GM10248 (cell line): ENCODE measurements at regions of chr15 and their contacts with region 1.

Region 1: GRCh38 chr15:82999905-83000671 is 11.4 kb downstream of the C15orf40 start:
- DNase-seq: peak; percentile 61
- CTCF ChIP-seq: peak; percentile 53

Region 2: DNA sequence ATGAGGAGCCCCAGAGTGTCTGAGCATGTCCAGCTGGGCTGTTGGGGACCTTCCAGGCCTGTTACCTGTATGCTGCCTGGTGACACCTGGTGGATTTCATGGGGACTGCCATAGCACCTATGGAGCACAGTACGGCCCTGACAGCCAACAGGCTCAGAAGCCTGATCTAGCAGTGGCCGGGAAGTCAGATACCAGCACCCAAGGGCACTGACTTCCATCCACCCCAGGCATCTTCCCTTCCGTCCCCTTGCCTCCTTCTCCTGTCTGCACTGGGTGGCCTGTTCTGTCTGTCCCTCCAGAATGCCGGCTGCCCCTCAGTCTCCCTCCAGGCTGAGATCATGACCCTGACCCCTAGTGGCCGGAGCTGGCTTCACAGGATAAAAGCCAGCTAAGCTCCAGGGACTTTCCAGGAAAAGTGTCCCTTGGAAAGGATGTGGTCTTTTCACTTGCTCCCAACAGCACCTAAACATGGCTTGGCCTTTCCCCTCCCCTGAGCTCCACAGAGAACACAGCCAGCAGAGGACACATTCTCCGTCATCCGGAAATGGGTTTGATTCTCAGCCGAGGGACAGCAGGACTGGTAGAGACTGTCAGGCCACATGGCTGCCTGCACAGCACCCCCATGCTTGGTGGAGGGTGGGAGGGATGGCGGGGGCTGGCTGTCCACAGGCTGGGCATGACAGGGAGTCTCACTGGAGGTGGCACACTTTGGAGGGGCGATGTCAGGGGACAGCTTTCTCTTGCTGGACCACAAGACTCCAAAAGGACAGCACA is 469.3 kb before region 1 on chr15:
- CTCF ChIA-PET with region 1: interaction called, 20 read pairs
- POLR2A ChIA-PET with region 1: no interaction called
- DNase-seq: peak; percentile 71
- CTCF ChIP-seq: peak; percentile 80

Region 3: GRCh38 chr15:82540055-82540983 is 459.8 kb before region 1 on chr15 and contains the start of gene RPS17:
- CTCF ChIA-PET with region 1: interaction called, 14 read pairs
- POLR2A ChIA-PET with region 1: no interaction called
- DNase-seq: peak; percentile 100
- CTCF ChIP-seq: peak; percentile 95

Region 4: DNA sequence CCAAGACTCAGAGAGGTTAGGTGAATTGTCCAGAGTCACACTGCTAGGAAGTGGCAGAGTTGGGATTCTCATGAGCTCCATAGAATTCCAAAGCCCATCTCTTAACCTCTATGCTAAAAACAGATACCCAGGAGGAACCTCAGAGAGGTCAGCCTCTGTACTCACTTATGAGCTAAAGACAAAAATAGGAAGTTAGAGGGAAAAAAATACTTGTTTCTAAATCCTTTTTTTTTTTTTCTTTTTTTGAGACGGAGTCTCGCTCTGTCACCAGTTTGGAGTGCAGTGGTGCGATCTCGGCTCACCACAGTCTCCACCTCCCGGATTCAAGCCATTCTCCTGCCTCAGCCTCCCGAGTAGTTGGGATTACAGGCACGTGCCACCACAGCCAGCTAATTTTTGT is 225.6 kb before region 1 on chr15:
- CTCF ChIA-PET with region 1: no interaction called
- POLR2A ChIA-PET with region 1: no interaction called
- DNase-seq: no peak
- CTCF ChIP-seq: no peak

Region 5: DNA sequence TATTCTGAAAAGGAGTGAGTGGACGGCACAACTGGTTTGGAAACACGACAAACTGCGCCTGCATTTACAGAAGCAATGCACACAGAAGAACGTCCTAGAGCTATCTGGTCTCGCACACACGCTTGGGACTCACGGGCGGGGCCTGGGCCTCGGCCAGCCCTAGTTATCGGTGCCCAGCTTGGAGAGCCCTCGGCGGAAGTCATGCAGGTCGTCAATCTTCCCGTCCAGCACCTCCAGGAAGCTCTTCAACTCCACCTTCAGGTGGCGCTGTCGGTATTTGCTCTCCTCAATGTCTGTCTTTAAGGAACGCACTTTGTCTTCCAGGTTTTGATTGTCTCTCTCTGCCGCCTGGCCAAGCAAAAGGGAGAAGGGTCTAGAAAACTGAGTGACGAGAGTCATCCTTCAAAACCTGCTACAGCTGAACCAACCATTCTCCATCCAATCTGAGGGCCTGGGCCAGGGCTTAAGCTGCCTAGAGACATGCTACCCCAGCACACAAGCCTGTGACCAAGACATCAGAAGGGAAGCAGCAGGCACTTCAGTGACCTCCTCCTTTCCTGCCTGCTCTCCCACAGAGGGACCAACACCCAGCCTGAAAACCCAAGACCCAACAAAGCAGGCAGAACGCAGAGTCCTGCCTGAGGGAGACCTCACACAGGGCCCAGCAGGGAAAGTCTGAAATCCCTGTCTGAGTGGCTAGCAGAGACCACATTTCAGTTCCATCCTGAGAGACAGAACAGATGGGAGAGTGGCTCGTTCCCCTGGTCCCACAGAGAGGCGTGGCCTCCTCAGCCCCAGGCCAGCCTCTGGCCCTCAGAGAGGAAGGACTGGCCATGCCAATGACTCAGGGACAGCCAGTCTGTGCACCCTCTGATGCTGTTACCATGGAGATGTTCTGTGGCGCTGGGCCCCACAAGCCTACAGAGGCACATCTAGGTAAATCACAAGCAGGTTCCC is 150.3 kb before region 1 on chr15:
- CTCF ChIA-PET with region 1: interaction called, 60 read pairs
- POLR2A ChIA-PET with region 1: no interaction called
- DNase-seq: peak; percentile 78
- CTCF ChIP-seq: peak; percentile 70

Region 6: DNA sequence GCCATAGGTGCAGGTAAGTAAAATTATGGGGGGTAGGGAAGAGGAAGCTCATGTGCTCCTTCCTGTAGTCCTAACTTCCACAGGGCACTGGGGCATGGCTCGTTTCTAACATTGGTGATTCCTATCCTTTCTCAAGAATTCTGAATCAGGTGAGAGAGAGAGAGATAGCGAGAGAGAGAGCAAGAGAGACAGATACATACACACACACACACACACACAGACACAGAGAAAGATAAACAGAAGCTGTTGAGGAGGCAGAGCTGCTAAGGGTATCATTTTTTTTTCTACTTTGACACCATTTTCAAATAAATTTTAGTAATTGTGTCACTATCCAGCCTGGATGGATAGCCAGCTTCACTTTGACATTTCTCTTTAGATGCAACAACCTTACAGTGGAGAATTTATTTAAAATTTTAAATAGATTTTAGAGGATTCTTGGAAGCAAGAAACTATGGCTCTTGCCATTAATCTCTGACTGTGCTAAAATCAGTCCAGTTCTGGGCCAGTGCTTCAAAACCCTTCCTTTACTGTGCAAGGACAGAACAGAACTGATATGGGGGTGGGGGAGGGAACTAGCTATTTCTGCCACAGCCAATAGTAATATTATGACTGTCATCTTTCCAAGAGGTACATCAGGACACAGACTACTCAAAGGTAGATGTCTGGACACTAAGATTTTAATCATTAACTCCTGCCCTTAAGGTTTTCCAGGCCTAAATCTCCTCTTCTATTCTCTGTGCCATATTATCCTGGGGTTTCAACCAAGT is 28.7 kb before region 1 on chr15:
- CTCF ChIA-PET with region 1: interaction called, 13 read pairs
- POLR2A ChIA-PET with region 1: no interaction called
- DNase-seq: no peak
- CTCF ChIP-seq: no peak

Region 7: GRCh38 chr15:82985688-82986441 is 14.2 kb before region 1 on chr15 and contains the start of gene RAMAC:
- CTCF ChIA-PET with region 1: interaction called, 30 read pairs
- POLR2A ChIA-PET with region 1: interaction called, 4 read pairs
- DNase-seq: peak; percentile 91
- CTCF ChIP-seq: no peak

Region 8: DNA sequence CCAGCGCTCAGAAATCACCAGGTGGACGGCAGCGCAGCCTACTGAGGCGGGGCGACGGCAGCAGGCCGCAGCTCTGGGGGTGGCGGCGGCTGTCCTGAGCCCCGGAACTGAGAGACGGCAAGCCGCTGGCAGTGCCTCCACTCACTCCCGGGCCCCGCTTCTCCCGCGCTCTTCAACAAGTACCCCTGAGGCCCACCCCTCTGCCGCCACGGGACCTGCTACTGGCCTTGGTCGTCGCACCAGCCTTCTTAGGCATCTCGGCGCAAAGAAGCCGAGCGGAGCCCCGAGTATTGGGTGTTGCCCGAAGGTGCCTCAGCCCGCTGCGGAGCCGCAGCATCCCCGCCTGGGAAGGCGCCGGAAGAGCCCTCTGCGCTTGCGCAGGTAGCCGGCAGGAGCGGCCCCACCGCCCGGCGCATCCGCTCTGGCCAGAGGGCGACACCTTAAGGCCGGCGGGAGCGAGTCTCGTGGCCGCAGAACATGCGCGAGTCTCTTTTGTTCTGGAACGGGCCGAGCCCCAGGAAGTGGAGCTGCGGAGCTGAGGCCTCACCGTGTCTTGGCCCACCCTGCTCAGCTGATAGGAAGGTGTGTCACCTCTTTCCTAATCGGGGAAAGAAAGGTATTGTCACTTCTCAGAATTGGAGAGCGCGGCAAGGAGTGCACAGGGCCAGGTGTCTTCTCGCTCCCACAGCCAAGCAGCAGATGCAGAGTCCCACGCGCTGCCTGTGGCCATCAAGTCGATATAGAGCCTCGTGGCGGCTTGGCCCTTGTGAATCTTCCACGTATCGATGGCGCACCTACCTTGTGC is 11.4 kb after region 1 on chr15 and contains the start of gene C15orf40:
- CTCF ChIA-PET with region 1: interaction called, 74 read pairs
- POLR2A ChIA-PET with region 1: no interaction called
- DNase-seq: peak; percentile 95
- CTCF ChIP-seq: peak; percentile 98

Region 9: GRCh38 chr15:83158401-83158800 is 158.3 kb after region 1 on chr15:
- CTCF ChIA-PET with region 1: no interaction called
- POLR2A ChIA-PET with region 1: no interaction called
- DNase-seq: no peak
- CTCF ChIP-seq: no peak